ENCODE measurements at regions of chr16 and their contacts with region 1.

Region 1: GRCh38 chr16:88194397-88195268 is 188.1 kb upstream of the ZNF469 start:
- DNase-seq: no peak
- H3K4me3 ChIP-seq: no peak overlapping the region
- H3K27ac ChIP-seq: no peak overlapping the region
- H3K4me1 ChIP-seq: no peaks in the 10 kb centered on the region
- H3K27me3 ChIP-seq: no peaks in the 10 kb centered on the region
- CTCF ChIP-seq: no peak

Region 2: DNA sequence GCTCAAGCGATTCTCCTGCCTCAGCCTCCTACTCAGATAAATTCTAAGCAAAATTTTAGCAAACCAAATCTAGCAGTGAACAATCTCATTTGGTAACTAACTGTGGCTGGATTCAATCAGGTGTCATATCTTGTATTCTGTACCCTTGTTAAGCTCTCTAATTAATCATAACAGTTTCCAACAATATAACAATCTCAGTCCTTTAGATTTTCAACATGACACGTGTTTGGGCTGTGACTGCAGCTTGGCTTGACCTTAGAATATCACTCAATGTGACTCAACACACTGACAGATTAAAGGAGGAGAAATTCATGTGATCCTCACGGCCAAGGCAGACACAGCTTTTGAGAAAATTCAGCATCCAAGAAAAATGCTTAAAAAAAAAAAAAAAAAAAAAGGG is 109.8 kb before region 1 on chr16:
- intact Hi-C with region 1: no loop called
- DNase-seq: no peak
- H3K4me3 ChIP-seq: no peak overlapping the region
- H3K27ac ChIP-seq: no peak overlapping the region
- H3K4me1 ChIP-seq: no peaks in the 10 kb centered on the region
- H3K27me3 ChIP-seq: no peaks in the 10 kb centered on the region
- CTCF ChIP-seq: no peak

Region 3: DNA sequence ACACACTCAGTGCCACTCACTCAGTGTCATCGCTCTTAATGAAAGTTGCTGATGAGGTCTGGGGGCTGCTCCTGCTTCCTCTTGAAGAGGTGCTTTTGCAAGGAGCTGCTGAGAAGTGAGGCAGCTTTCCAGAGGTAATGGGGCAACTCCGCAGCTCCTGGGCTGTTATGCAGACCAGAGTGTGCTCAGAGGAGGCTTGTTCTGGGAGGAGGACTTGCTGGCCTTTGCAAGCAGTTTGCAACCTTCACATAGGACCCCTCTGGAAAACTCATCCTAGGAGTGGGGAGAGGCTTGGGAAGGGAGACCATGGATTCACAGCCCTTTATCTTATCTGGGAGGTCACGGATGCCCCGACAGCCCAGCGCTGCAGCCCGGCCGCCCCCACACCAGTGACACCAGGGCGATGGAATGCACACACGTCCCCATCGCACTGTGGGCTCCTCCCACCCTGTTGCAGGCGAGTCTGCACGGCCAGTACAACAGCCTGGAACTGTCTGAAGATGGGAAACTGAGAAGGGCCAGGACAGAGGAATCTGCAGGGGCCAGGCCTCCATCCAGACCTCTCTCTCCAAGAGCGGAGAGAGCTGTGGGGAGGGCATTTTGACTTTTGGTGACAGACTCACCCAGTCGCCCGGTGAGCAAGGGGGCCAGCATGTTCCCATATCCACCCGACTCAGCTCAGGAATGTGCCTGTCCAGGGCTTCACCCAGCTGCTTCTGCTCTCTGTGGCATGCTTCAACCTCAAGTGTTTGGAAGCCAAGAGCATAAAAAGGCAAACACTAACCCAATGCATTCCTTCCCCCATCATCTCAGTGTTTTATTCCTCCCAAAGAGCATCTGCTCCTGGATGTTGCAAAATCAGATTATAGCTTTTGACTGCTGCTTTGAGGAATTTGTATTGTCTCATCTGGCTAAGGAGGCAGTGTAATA is 109.5 kb after region 1 on chr16:
- intact Hi-C with region 1: loop called (anchors 10 kb)
- DNase-seq: no peak
- H3K4me3 ChIP-seq: no peak overlapping the region
- H3K27ac ChIP-seq: no peak overlapping the region
- H3K4me1 ChIP-seq: peaks cover 14 to 28% of the 10 kb centered on the region in 2 donors
- H3K27me3 ChIP-seq: no peaks in the 10 kb centered on the region
- CTCF ChIP-seq: no peak